Activated CD8-positive, alpha-beta T cell treated with anti-CD3 and anti-CD28 coated beads, Interleukin-2, amount 10 ng/mL, durations not matched to agents 7 days and 5 days (primary cell): ENCODE measurements at regions of chr9 and their contacts with region 1.

Region 1: GRCh38 chr9:129131300-129132145 is 20.3 kb downstream of the PTPA start:
- DNase-seq: peak; percentile 89
- ATAC-seq: peak; percentile 97
- H3K4me3 Mint-ChIP-seq: no peak overlapping the region
- H3K27ac Mint-ChIP-seq: no peak overlapping the region
- H3K4me1 Mint-ChIP-seq: peaks cover 7% of the 10 kb centered on the region
- H3K27me3 Mint-ChIP-seq: no peaks in the 10 kb centered on the region

Region 2: GRCh38 chr9:129023036-129023907 is 108.3 kb before region 1 on chr9:
- CTCF ChIA-PET with region 1: no interaction called
- POLR2A ChIA-PET with region 1: no interaction called
- DNase-seq: no peak
- ATAC-seq: no peak
- H3K4me3 Mint-ChIP-seq: no peak overlapping the region
- H3K27ac Mint-ChIP-seq: no peak overlapping the region
- H3K4me1 Mint-ChIP-seq: peaks cover 38% of the 10 kb centered on the region
- H3K27me3 Mint-ChIP-seq: no peaks in the 10 kb centered on the region

Region 3: DNA sequence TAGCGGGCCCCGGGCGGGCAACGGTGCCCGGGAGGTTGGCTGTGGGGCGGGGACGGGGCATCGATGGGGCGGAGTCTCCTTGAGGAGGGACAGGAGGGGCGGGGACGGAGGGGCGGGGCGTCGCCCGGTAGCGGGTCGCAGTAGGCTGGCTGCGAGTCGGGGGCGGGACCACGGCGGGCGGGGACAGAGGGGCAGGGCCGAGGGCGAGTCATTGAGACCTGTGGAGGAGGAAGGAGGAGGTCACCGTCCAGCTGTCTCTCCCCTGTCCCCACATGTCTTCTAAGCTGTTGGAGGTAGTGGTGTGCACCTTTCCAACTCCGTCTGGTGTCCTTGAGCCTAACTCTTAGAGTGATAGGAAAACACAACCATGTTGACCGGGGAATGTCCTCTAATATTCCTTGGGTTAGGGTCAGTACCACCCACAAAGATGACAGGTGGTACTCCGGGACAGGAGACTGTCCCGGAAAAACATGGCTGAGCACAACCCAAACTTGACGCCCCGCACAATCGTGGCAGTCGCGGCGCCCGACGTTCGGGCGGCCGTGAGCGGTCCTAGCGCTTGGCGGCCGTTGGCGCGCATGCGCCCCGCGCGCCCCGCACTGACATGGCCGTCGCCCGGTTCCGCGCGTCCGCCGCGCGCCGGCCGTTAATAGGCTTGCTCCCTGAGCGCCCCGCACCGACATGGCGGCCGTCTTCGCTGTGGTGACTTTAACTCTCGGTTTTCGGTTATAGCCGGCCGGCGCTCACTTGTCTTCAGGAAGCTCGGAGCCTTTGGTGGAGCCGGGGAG is 20.6 kb before region 1 on chr9 and contains the starts of genes CRAT and PTPA:
- CTCF ChIA-PET with region 1: interaction called, 39 read pairs
- POLR2A ChIA-PET with region 1: interaction called, 3 read pairs
- DNase-seq: peak; percentile 97
- ATAC-seq: peak; percentile 92
- H3K4me3 Mint-ChIP-seq: peak within 1 kb of the TSS; percentile 96
- H3K27ac Mint-ChIP-seq: peak within 1 kb of the TSS; percentile 98
- H3K4me1 Mint-ChIP-seq: peaks cover 40% of the 10 kb centered on the region
- H3K27me3 Mint-ChIP-seq: peaks cover 4% of the 10 kb centered on the region
- total RNA-seq, gene CRAT: 21.9 to 22.2 TPM
- total RNA-seq, gene PTPA: 114 to 125 TPM

Region 4: GRCh38 chr9:129166623-129167557 is 35.4 kb after region 1 on chr9:
- CTCF ChIA-PET with region 1: interaction called, 43 read pairs
- POLR2A ChIA-PET with region 1: no interaction called
- DNase-seq: peak; percentile 35
- ATAC-seq: peak; percentile 55
- H3K4me3 Mint-ChIP-seq: peak overlapping the region; percentile 56
- H3K27ac Mint-ChIP-seq: peak overlapping the region; percentile 55
- H3K4me1 Mint-ChIP-seq: peaks cover 39% of the 10 kb centered on the region
- H3K27me3 Mint-ChIP-seq: peaks cover 1% of the 10 kb centered on the region

Region 5: DNA sequence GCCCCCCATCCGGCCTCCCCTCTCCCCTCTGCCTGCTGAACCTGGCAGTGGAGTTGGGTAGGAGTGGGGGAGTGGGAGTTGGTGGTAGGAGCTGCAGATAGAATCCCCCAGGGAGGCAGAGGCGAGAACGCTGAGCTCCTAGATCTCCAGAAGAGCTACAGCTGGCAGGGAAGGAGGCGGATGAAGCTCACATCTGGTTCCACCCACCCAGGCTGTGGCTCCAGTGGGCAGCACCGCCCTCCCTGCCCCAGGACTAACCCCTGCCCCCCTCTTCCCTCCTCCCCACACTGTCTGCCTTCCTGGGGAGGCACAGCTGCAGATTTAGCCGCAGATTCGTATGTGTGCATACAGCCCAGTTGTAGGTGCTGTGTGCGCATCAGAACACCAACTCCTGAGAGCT is 455.2 kb after region 1 on chr9:
- CTCF ChIA-PET with region 1: interaction called, 11 read pairs
- POLR2A ChIA-PET with region 1: no interaction called
- DNase-seq: peak; percentile 72
- ATAC-seq: peak; percentile 52
- H3K4me3 Mint-ChIP-seq: peak overlapping the region; percentile 24
- H3K27ac Mint-ChIP-seq: peak overlapping the region; percentile 93
- H3K4me1 Mint-ChIP-seq: peaks cover 67% of the 10 kb centered on the region
- H3K27me3 Mint-ChIP-seq: peaks cover 17% of the 10 kb centered on the region

Region 6: GRCh38 chr9:129610473-129611301 is 479.2 kb after region 1 on chr9:
- CTCF ChIA-PET with region 1: interaction called, 29 read pairs
- POLR2A ChIA-PET with region 1: no interaction called
- DNase-seq: peak; percentile 79
- ATAC-seq: peak; percentile 78
- H3K4me3 Mint-ChIP-seq: peak overlapping the region; percentile 58
- H3K27ac Mint-ChIP-seq: peak overlapping the region; percentile 43
- H3K4me1 Mint-ChIP-seq: peaks cover 49% of the 10 kb centered on the region
- H3K27me3 Mint-ChIP-seq: peaks cover 2% of the 10 kb centered on the region

Region 7: GRCh38 chr9:129619787-129620668 is 488.5 kb after region 1 on chr9:
- CTCF ChIA-PET with region 1: interaction called, 176 read pairs
- POLR2A ChIA-PET with region 1: interaction called, 5 read pairs
- DNase-seq: no peak
- ATAC-seq: peak; percentile 31
- H3K4me3 Mint-ChIP-seq: peak overlapping the region; percentile 34
- H3K27ac Mint-ChIP-seq: no peak overlapping the region
- H3K4me1 Mint-ChIP-seq: peaks cover 13% of the 10 kb centered on the region
- H3K27me3 Mint-ChIP-seq: peaks cover 27% of the 10 kb centered on the region